ENCODE measurements at regions of chr17 and their contacts with region 1.

Region 1: DNA sequence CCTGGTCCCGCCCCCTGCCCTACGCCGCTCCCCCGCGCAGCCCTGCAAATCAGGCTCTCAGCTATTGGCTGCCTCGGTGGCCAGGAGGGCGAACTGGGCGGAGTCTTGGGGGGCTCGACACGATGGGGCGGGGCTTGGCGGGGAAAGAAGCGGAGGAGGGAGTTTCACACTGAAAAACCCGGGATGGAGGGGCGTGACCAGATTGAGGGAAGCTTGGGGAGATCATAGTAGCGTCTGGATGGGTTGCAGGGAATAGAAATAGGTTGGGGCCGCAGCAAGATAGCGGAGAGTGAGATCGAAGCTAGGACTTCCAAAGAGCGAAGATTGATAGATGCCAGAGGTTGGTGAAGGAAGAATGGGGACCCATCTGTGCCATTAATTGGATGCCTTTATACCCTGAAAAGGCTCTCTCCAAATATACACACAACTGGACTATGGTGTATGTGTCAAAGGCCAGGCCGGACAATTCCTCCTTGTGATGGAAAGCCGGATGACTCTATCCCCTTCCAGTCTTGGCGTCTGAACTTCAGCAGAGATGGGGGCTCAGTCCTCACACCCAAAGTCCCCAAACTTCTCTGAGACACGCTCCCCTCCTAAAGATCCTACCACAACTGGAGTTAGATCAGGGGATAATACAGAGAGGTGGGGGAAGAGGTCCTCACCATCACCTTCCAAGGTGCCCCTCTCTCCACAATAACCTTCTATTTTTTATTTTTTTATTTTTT is 376 bp upstream of the STAC2 start:
- H3K4me3 ChIP-seq: peak overlapping the region; percentile 30
- H3K27ac ChIP-seq: no peak overlapping the region
- H3K4me1 ChIP-seq: peaks cover 6% of the 10 kb centered on the region
- CTCF ChIP-seq: no peak

Region 2: DNA sequence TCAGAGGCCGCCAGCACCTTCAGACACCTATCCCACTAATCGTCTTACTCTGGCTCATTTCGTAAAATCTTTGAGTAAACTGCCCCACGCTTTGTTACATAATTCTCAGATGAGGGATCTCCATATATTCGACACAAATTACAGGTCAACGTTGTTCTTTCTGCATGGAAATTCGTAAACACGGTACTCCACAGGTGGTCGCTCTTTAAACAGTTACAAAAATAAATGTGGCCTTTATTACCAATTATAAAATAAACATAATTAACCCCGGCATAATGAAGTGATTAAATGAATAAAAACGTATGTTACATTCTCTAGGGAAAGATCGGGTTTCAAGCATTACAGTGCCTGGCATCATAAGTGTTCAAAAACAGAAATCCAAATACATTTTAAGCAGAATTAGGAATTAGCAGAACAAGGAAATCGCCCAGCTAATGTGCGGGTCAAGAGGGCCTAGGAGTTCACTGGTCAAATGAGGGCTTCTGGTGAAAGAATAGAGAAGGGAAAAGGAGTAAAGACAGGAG is 425.8 kb before region 1 on chr17:
- CTCF ChIA-PET with region 1: no interaction called
- POLR2A ChIA-PET with region 1: no interaction called
- H3K4me3 ChIP-seq: peak overlapping the region; percentile 83
- H3K27ac ChIP-seq: peak overlapping the region; percentile 99
- H3K4me1 ChIP-seq: peaks cover 17% of the 10 kb centered on the region
- CTCF ChIP-seq: no peak

Region 3: GRCh38 chr17:39181303-39181702 is 44.8 kb before region 1 on chr17:
- CTCF ChIA-PET with region 1: no interaction called
- POLR2A ChIA-PET with region 1: no interaction called
- H3K4me3 ChIP-seq: no peak overlapping the region
- H3K27ac ChIP-seq: no peak overlapping the region
- H3K4me1 ChIP-seq: 0 out of 2 replicates have a peak, but pooled peaks cover 7% of the 10 kb centered on the region
- CTCF ChIP-seq: no peak

Region 4: DNA sequence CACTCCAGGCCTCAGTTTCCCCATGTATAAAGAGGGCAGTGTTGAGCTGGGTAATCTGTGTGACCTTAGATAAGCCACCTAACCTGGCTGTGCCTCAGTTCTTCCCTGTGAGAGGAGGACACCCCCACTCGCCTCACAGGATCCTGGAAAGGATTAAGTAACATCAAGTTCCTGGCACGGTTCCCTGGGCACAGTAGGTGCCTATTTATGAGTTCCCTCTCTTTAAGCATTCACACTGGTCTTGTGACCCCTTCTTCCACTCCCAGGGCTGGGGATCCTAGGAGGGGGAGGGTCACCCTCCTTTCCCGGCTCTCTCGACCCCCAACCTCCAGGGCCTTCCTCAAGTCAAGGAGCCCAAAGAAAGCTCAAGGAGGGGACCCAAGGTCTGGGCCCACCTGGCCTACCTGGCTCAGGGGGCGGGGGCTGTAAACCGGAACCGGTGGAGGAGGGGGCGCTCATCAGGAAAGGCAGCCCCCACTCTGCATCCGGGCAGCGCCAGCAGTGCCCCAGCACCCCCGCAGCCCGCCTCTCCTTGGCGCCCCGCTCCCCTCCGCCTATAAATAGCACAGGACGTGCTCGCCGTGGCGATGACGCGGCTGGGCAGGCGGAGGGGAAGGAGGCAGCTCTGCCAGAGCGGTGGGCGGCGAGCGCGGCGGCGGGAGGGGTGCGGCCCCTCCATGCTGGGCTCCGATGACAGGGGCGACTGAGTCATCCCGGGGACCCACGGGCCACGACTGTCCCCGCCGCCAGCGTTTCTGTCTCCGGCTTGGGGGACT is 16.6 kb before region 1 on chr17:
- CTCF ChIA-PET with region 1: interaction called, 733 read pairs
- POLR2A ChIA-PET with region 1: interaction called, 10 read pairs
- H3K4me3 ChIP-seq: peak overlapping the region; percentile 13
- H3K27ac ChIP-seq: peak overlapping the region; percentile 28; the same call in 1 of the 2 replicates
- H3K4me1 ChIP-seq: peaks cover 16% of the 10 kb centered on the region
- CTCF ChIP-seq: no peak